GM10248 (cell line): ENCODE measurements at regions of chr7 and their contacts with region 1.

Region 1: DNA sequence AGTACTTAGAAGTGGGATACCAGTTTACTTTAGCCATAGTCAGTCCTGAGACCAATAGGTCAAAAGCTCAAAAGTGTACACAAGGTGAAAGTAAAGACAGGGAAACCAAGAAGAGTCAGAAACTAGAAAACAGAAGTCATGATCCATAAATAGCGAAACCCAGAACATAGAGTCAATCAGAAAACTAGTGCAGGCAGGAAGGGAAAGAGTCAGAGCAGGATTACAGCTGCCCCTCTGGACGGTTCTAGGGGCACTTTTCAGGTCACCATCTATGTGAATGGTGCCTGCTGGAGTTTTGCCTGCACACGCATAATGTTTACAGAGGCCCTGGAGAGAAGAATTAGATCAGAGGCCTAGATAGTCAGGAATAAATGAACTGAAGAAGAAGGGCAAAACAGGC is 22.4 kb upstream of the DMTF1 start:
- DNase-seq: peak; percentile 18
- CTCF ChIP-seq: no peak

Region 2: GRCh38 chr7:87144173-87144657 is 14.4 kb after region 1 on chr7:
- CTCF ChIA-PET with region 1: interaction called, 52 read pairs
- POLR2A ChIA-PET with region 1: no interaction called
- DNase-seq: peak; percentile 34
- CTCF ChIP-seq: no peak

Region 3: DNA sequence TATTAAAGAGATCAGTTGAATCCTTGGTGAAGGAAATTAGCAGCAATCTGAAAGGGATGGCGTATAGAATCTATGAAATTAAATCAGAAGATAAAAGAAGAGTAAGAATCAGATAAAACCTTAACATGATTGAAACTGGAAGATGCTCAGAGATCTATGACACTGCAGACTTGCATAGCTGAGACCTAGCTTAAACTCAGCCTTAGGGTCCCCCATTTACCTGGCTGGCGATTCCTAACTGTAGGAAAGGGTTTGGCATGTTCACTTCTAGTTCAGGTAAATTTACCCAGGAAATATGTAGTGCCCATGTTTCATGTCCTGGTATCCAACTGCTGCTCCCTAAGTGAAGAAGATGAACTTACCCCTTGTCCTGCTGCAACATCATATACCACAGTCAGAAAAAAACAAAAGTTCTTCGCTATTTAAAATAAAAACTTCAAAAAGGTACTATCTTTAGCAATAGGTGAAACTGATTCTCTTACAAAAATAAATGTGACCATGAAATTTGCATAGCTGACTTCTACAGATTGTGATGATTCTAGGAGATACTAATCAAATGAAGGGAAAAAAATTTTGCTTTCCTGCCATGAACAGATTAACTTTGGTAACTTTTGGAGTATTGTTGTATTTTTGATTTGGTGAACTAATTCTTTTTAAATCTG is 137.5 kb after region 1 on chr7:
- CTCF ChIA-PET with region 1: no interaction called
- POLR2A ChIA-PET with region 1: no interaction called
- DNase-seq: no peak
- CTCF ChIP-seq: no peak